Activated T-helper 2 cell treated with anti-CD3 and anti-CD28 coated beads, Interferon-gamma antibody, Interleukin-2, Interleukin-4, amounts not matched to agents 10 μg/mL and 5 μg/mL and 100 μg/mL, durations not matched to agents 14 hours and 24 hours and 36 hours (primary cell): ENCODE measurements at regions of chr14 and their contacts with region 1.

Region 1: DNA sequence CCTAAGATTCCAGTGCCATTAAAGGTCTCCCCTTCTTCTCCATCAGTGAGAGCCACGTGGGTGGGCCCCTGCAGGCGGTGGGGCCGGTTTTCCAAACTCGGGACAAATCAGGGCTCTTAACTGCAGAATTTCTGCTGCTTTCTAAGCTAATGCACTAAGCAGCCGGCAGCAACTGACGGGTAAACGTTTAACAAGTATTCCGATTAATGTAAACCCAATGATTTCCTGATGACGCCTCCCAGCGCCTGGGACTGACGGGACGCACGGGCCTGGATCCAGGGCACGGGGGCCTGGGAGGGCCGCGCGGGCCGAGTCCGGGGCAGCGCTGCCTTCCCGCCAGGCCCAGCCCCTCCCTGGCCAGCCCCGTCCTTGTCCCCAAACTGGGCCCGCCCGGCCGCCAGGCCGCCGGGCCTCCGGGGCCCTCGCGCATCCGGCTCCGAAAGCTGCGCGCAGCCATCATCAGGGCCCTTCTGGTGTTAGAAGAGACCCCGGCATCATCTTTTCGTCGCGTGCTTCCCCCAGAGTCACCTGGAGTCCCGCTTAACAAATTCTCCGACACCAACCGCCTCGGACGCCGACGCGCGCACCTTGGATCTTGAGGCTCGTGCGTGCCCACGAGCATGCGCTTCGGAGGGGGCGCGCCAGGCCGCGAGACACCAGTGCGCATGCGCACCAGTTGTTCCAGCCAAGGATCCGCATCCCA is at the start of gene MLH3:
- DNase-seq: peak; percentile 73
- H3K4me3 Mint-ChIP-seq: peak within 1 kb of the TSS; percentile 88
- H3K27ac Mint-ChIP-seq: peak within 1 kb of the TSS; percentile 93
- H3K4me1 Mint-ChIP-seq: peaks cover 64% of the 10 kb centered on the region
- H3K27me3 Mint-ChIP-seq: no peaks in the 10 kb centered on the region
- total RNA-seq, gene MLH3: 28.2 and 28.3 TPM in 2 replicates

Region 2: DNA sequence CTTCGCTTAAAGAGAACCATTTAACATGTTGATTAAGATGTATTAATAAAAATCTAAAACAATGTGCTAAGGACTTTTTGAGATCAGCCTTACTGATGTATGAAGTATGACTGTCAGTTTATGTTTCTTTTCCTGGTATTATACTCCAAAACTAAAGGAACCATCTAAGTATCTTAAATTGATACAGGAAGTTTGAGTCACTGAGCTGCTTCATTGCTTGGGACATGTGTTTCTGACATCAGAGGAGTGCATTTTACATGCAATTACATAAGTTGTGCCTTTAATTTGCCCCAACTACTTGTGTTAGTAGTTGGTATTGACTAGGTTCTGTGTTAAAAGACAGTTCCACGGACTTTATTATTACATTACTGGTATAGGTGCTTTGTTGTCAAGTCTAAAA is 226.0 kb before region 1 on chr14:
- intact Hi-C with region 1: no loop called
- DNase-seq: no peak
- H3K4me3 Mint-ChIP-seq: no peak overlapping the region
- H3K27ac Mint-ChIP-seq: no peak overlapping the region
- H3K4me1 Mint-ChIP-seq: peaks cover 2% of the 10 kb centered on the region
- H3K27me3 Mint-ChIP-seq: no peaks in the 10 kb centered on the region

Region 3: GRCh38 chr14:75011356-75011994 is 39.5 kb before region 1 on chr14:
- intact Hi-C with region 1: loop called (anchors 5 kb)
- DNase-seq: no peak
- H3K4me3 Mint-ChIP-seq: no peak overlapping the region
- H3K27ac Mint-ChIP-seq: peak overlapping the region; percentile 67
- H3K4me1 Mint-ChIP-seq: peaks cover 18% of the 10 kb centered on the region
- H3K27me3 Mint-ChIP-seq: no peaks in the 10 kb centered on the region

Region 4: GRCh38 chr14:75063407-75064213 is 12.6 kb after region 1 on chr14 and contains the start of gene ACYP1:
- intact Hi-C with region 1: loop called (anchors 1 kb)
- DNase-seq: peak; percentile 89
- H3K4me3 Mint-ChIP-seq: peak within 1 kb of the TSS; percentile 99
- H3K27ac Mint-ChIP-seq: peak within 1 kb of the TSS; percentile 94
- H3K4me1 Mint-ChIP-seq: peaks cover 27% of the 10 kb centered on the region
- H3K27me3 Mint-ChIP-seq: no peaks in the 10 kb centered on the region
- total RNA-seq, gene ACYP1: 42.8 and 43.5 TPM in 2 replicates

Region 5: DNA sequence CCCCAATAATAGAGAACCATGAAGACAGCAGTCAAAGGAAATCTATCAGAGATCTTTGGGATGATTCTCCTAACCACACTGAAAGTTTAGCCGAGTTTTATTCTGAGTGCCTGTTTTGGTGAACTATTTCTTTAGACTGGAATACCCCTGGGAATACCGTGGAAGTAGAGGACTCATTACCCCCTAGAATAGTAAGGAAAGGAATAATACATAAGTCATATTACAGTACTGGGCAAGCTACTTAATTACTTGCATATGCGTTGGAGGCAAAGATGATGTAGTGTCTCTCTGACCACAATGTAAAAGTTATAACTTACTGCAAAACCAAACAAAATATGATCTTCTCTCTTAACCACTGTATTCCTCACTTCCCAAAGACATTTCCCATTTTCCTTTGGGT is 43.9 kb after region 1 on chr14:
- intact Hi-C with region 1: no loop called
- DNase-seq: no peak
- H3K4me3 Mint-ChIP-seq: no peak overlapping the region
- H3K27ac Mint-ChIP-seq: no peak overlapping the region
- H3K4me1 Mint-ChIP-seq: no peaks in the 10 kb centered on the region
- H3K27me3 Mint-ChIP-seq: no peaks in the 10 kb centered on the region